ENCODE measurements at regions of chr2 and their contacts with region 1.

Region 1: GRCh38 chr2:37414470-37414949 is 70.1 kb downstream of the QPCT start:
- DNase-seq: peak; percentile 85
- H3K4me3 ChIP-seq: no peak overlapping the region
- H3K27ac ChIP-seq: no peak overlapping the region
- H3K4me1 ChIP-seq: peaks cover 22% of the 10 kb centered on the region
- H3K27me3 ChIP-seq: no peaks in the 10 kb centered on the region

Region 2: GRCh38 chr2:37648331-37649011 is 234.0 kb after region 1 on chr2:
- in situ Hi-C with region 1: loop called (anchors 10 kb)
- DNase-seq: peak; percentile 59
- H3K4me3 ChIP-seq: no peak overlapping the region
- H3K27ac ChIP-seq: peak overlapping the region; percentile 47
- H3K4me1 ChIP-seq: peaks cover 92% of the 10 kb centered on the region
- H3K27me3 ChIP-seq: no peaks in the 10 kb centered on the region

Region 3: GRCh38 chr2:37832590-37833197 is 418.2 kb after region 1 on chr2:
- in situ Hi-C with region 1: loop called (anchors 25 kb)
- DNase-seq: peak; percentile 88
- H3K4me3 ChIP-seq: no peak overlapping the region
- H3K27ac ChIP-seq: no peak overlapping the region
- H3K4me1 ChIP-seq: peaks cover 30% of the 10 kb centered on the region
- H3K27me3 ChIP-seq: no peaks in the 10 kb centered on the region